Sciatic nerve (tissue), 2 donors: ENCODE measurements at regions of chr11 and their contacts with region 1.

Region 1: DNA sequence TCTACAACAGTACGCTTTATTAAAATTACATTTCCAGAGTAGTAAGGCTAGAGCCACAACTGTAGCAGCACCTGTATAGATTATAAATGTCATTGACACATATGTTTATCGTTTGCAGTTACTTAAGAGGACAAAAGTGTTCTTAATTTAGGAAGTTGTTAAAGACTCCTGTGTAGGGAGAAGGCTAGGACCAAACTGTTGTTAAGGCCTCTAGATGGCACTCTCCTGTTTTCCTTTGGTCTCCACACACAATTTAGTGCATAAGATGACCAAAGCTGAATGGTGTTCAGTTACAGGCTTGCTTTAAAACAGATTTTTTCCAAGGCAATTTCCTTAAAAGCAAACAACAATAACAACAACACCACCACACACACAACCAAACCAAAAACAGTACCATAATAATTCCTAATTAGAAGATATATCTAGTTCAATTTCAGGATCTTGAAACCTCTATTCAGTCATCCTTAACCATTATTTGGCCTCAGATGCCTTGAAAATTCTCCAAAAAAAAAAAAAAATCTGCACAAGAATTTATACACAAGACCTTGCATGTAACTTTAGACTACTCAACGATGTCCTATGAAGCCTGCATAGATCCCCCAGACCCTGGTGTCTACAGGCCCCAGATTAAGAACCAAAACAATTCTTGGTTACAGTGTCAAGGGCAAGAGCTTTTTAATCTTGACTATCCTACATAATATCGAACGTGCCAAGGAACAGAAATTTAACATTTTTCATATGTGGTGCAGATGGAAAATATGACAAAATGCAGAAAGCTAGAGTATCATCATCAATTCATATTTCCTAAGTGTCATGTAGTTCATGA is 42.6 kb upstream of the APOA1 start:
- DNase-seq: no peak
- ATAC-seq: peak; percentile 93

Region 2: DNA sequence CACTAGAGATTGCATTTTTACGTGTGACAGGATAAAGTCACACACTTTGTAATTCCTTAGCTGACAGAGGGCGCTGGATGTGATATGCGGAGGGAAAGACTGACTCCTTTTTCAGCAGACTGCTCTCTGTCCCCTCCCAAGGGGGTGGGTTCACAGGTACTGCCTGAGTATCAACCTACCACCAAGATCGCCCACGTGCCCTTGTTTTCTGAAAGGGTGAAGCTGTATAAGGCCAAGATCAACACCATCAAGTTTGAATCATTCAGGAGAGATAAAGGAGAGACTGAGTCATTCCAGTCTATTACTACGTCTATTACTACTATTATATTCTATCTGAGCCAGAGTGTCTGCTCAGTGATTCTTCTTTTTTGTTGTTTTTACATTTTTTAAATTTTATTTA is 137.9 kb before region 1 on chr11:
- intact Hi-C with region 1: no loop called
- DNase-seq: no peak
- ATAC-seq: peak; percentile 23

Region 3: GRCh38 chr11:117099696-117100095 is 219.7 kb after region 1 on chr11:
- intact Hi-C with region 1: loop called (anchors 5 kb)
- DNase-seq: no peak
- ATAC-seq: no peak

Region 4: DNA sequence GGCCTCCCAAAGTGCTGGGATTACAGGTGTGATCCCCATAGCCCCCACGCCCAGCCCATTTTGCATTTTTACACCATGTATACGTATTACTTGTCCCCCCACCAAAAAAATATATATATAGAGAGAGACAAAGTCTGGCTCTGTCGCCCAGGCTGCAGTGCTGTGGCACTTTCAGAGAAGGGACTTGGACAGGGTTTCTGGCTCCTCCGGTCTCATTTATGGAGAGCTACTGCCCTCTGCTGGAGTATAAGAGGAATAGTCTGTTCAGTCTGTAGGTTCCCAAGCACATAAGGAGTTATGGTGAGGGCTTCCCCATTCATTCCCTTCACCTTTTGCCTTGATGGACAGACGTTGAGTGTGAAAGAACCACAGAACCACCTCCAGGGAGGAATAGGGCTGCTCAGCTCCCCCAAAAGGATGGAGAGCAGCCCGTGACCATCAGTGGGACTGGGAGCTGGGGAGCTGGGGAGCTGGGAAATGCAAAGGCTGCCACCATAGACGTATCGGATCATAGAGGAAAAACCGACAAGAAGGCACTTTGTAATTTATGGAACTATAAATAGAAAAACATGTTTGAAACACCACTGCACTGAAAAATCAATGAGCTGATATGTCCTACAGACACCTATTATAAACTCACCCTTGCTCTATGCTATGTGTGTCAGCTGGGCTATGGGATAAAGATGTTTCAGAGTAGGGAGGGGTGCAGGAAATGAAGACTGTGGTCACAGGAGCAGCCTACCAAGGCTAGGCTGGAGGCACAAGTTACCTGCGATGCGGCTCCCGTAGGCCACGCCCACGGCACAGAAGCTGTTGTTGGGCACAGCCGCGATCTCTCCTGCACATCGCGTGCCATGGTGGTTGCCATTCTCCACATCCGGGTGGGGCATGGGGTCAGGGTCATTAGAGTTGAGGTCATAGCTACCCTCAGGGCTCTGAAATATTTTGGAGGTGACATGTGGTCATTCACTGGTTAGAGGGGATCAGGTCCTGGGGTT is 346.7 kb after region 1 on chr11:
- intact Hi-C with region 1: loop called (anchors 10 kb)
- DNase-seq: peak; percentile 64
- ATAC-seq: peak; percentile 57